Ascending aorta (tissue), 2 donors: ENCODE measurements at regions of chr15 and their contacts with region 1.

Region 1: DNA sequence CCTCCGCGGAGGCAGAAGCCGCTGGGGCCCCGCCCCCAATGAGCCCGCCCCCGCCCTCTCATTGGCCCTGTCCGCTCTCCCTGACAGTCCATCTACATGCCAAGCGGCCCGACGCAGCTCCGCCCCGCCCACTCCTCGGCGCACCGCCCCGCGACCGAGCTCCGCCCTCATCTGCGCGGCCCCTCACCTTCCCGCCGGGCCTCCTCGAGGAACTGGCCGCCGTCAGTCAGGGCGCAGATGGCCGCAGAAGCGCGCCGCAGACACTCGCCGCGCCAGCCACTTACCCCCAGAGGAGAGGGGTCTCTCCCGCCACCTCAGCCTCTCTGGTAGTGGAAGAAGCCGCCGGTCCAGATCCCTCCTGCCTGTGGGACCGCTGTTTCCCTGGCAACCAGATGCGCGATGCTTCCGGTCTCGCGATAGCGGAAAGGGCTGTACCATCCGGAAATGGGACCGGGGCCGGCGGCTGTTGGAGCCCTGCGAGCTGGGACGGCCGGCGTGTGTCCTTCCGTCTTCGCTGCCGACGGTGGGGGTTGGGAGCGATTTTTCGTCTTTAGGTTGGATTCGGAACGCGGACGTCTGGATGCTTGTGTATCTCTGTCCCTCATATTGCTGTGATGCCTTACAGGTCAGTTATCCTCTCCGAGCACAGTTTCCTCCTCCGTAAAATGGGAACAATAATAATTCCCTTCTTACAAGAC is at the start of gene FSIP1:
- DNase-seq: peak; percentile 83 to 98
- H3K4me3 ChIP-seq: peak within 1 kb of the TSS; percentile 84 to 94
- H3K27ac ChIP-seq: peak within 1 kb of the TSS; percentile 61 to 81
- H3K4me1 ChIP-seq: peaks cover 0 to 8% of the 10 kb centered on the region in 2 donors
- H3K27me3 ChIP-seq: no peaks in the 10 kb centered on the region
- CTCF ChIP-seq: no peak
- total RNA-seq, gene FSIP1: not detected

Region 2: GRCh38 chr15:39920510-39921273 is 138.1 kb after region 1 on chr15:
- intact Hi-C with region 1: loop called (anchors 2 kb)
- DNase-seq: peak; percentile 27 to 89
- H3K4me3 ChIP-seq: peak overlapping the region; percentile 80 to 88
- H3K27ac ChIP-seq: peak overlapping the region; percentile 92 to 94
- H3K4me1 ChIP-seq: no peaks in the 10 kb centered on the region
- H3K27me3 ChIP-seq: no peaks in the 10 kb centered on the region
- CTCF ChIP-seq: no peak

Region 3: GRCh38 chr15:39934397-39935071 is 151.9 kb after region 1 on chr15:
- intact Hi-C with region 1: loop called (anchors 1 kb)
- DNase-seq: no peak
- H3K4me3 ChIP-seq: peak overlapping the region; percentile 82 to 88
- H3K27ac ChIP-seq: peak overlapping the region; percentile 88 to 91
- H3K4me1 ChIP-seq: peaks cover 9 to 26% of the 10 kb centered on the region in 2 donors
- H3K27me3 ChIP-seq: no peaks in the 10 kb centered on the region
- CTCF ChIP-seq: no peak

Region 4: DNA sequence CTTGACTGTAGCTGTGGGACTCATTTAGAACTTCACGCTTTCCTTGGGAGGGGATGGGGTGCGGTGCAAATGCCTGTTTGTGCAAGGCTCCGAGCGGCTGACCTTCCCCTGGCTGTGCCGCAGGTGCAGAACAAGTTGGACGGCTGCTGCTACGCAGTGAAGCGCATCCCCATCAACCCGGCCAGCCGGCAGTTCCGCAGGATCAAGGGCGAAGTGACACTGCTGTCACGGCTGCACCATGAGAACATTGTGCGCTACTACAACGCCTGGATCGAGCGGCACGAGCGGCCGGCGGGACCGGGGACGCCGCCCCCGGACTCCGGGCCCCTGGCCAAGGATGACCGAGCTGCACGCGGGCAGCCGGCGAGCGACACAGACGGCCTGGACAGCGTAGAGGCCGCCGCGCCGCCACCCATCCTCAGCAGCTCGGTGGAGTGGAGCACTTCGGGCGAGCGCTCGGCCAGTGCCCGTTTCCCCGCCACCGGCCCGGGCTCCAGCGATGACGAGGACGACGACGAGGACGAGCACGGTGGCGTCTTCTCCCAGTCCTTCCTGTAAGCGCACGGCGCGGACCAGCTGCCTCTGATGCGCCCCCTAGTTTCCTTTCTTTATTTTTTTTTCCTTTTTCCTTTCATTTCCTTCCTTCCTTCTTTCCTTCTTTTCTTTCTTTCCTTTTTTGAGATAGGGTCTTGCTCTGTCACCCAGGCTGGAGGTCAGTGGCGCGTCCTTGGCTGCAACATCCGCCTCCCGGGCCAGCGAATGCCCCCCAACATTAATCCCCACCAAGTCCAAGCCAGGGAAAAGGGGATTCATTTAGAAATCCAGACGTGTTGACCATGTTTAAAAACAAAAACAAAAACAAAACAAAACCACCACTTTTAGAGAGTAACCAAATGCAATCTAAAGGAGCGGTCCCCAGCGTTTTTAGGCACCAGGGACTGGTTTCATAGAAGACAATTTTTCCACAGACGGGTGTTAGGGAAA is 194.0 kb after region 1 on chr15:
- intact Hi-C with region 1: loop called (anchors 1 kb)
- DNase-seq: peak in 1 of 2 donors; percentile 72
- H3K4me3 ChIP-seq: peak overlapping the region; percentile 44 to 69
- H3K27ac ChIP-seq: peak overlapping the region; percentile 42 to 55
- H3K4me1 ChIP-seq: peaks cover 0 to 4% of the 10 kb centered on the region in 2 donors
- H3K27me3 ChIP-seq: no peaks in the 10 kb centered on the region
- CTCF ChIP-seq: peak; percentile 6 to 63 (median 33)

Region 5: DNA sequence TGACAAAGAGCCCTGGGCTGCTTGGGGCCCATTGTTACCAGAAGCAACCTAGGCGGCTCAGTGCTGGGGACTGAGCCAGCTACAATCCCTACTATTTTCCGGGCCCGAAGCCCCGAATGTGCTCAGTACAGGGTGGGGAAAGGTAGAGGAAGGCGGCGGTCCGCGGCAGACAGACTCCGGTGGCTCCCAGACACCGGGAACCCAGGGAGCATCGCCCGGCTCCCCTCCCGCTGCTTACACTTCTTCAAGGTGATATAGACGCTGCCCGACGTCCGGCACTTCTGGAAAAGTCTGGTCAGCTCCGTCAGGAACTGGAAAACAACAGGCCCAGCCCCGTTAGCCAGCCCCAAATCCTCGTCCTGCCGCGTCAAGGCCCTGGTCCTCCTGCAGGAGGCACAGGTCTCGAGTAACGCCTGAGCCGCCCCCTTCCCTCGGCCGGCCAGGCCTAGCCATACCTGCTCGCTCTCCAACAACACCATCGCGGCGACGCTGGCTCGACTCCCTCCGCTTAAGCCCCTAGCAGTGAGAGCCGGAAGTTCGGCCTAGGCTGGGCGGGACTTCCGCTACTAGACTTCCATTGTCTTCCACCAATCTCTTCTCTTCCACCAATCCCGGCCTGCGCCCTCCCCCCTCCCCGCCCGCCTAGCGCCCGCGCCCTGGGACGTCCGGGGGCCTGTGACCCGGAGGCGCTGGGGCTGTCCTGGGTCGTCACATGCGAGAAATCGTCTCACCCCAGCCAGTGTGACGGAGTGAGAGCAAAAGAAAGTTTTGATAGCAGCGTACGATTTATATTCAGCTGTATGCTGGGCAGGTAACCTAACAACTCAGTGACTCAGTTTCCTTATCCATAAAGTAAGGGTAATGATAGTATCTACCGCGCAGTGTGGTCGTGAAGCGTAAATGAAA is 256.3 kb after region 1 on chr15 and contains the start of gene SRP14:
- intact Hi-C with region 1: loop called (anchors 2 kb)
- DNase-seq: peak; percentile 88 to 98
- H3K4me3 ChIP-seq: peak within 1 kb of the TSS; percentile 74 to 82
- H3K27ac ChIP-seq: peak within 1 kb of the TSS; percentile 87 to 93
- H3K4me1 ChIP-seq: peaks cover 0 to 7% of the 10 kb centered on the region in 2 donors
- H3K27me3 ChIP-seq: no peaks in the 10 kb centered on the region
- CTCF ChIP-seq: peak in 1 of 3 experiments; percentile 41
- total RNA-seq, gene SRP14: 365 TPM

Region 6: GRCh38 chr15:41283653-41284426 is 1501.2 kb after region 1 on chr15:
- intact Hi-C with region 1: loop called (anchors 5 kb)
- DNase-seq: peak; percentile 89 to 99
- H3K4me3 ChIP-seq: peak overlapping the region; percentile 72 to 88
- H3K27ac ChIP-seq: peak overlapping the region; percentile 83 to 84
- H3K4me1 ChIP-seq: peaks cover 6 to 16% of the 10 kb centered on the region in 2 donors
- H3K27me3 ChIP-seq: no peaks in the 10 kb centered on the region
- CTCF ChIP-seq: no peak